ENCODE measurements at regions of chr19 and their contacts with region 1.

Region 1: DNA sequence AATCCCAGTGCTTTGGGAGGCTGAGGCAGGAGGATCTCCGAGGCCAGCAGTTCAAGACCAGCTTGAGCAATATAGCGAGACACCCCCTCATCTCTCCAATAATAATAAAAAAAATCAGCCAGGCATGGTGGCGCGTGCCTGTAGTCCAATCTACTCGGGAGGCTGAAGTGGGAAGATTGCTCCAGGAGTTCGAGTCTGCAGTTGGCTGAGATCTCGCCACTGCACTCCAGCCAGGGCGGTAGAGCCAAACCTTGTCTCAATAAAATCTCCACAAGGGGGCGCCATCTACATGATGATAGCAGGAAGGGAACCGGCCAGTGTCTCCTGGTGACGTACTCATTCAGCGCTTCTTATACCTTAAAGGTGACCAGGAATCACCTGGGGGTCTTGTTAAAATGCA is 13.6 kb upstream of the C5AR1 start:
- DNase-seq: peak; percentile 50
- H3K4me3 ChIP-seq: no peak overlapping the region
- H3K27ac ChIP-seq: no peak overlapping the region
- H3K27me3 ChIP-seq: no peaks in the 10 kb centered on the region
- CTCF ChIP-seq: peak; percentile 76

Region 2: DNA sequence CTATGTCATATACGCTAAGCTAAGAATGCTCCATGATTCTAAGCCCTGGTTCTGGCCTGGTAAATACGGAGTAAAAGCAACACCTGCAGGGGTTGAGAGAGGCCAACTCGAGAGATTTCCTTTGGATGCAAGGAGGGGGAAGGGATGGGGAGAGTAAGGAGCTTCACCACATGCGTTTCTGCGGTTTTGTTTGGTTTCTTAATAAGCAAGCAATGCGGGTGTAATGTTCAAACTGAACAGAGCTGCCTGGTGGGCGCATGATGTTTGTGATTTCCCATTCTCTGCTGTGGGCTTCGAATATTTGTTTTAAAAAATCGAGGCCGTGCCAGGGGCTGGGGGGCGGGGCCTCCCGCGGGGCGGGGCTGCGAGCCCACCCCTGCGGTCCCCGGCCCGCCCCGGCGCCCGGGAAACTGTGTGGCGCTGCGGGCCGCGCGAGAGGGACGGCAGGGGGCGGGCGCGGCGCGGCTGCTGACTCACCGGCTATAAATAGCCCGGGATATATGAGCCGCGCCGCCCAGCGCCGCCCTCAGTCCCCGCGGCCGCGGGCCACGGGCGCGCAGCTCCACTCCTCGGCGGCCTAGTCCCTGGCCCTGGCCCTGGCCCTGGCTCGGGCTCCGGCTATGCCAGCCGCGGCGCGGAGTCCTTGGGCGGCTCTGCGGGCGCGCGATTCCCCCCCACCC is 70.2 kb before region 1 on chr19:
- CTCF ChIA-PET with region 1: no interaction called
- POLR2A ChIA-PET with region 1: no interaction called
- DNase-seq: peak; percentile 59
- H3K4me3 ChIP-seq: peak overlapping the region; percentile 98
- H3K27ac ChIP-seq: peak overlapping the region; percentile 77
- H3K27me3 ChIP-seq: no peaks in the 10 kb centered on the region
- CTCF ChIP-seq: no peak; the same call in none of the 2 replicates

Region 3: GRCh38 chr19:47284324-47284899 is 11.6 kb before region 1 on chr19:
- CTCF ChIA-PET with region 1: interaction called, 15 read pairs
- POLR2A ChIA-PET with region 1: no interaction called
- DNase-seq: peak; percentile 33
- H3K4me3 ChIP-seq: no peak overlapping the region
- H3K27ac ChIP-seq: no peak overlapping the region
- H3K27me3 ChIP-seq: no peaks in the 10 kb centered on the region
- CTCF ChIP-seq: peak; percentile 83

Region 4: DNA sequence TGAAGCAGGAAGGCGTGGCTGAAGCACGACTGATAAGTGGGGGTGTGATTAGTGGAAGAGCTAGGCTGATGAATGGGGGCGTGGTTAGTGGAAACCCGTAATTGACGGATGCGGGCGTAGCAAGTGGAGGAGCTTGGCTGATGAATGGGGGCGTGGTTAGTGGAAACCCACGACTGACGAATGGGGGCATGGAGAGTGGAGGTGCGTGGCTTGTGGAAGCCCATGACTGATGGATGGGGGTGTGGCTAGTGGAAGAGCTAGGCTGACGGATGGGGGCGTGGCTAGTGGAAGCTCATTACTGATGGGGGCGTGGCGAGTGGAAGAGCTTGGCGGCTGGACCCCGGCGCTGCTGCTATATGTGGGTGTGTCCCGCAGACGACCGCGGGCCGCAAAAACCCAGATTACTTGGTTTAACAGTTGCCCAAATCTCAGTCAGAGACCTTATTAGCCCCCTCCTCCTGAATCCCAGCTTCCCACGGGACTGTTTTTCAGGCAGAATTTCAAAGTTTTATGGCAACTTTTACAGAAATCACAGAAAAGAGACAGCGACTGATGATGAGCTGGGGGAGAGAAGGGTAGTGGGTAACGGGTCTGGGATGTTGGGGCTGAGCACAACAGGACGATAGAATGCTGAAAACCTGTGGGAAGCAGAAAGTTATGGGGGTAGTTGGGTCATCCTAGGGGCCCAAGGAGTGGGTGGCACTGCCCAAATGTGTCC is 132.3 kb after region 1 on chr19:
- CTCF ChIA-PET with region 1: interaction called, 27 read pairs
- POLR2A ChIA-PET with region 1: interaction called, 5 read pairs
- DNase-seq: peak; percentile 92
- H3K4me3 ChIP-seq: peak overlapping the region; percentile 50
- H3K27ac ChIP-seq: peak overlapping the region; percentile 11
- H3K27me3 ChIP-seq: peaks cover 10% of the 10 kb centered on the region
- CTCF ChIP-seq: no peak

Measured in AG04450 (cell line).